Activated CD4-positive, alpha-beta T cell treated with anti-CD3 and anti-CD28 coated beads for 36 hours (primary cell): ENCODE measurements at regions of chr12 and their contacts with region 1.

Region 1: DNA sequence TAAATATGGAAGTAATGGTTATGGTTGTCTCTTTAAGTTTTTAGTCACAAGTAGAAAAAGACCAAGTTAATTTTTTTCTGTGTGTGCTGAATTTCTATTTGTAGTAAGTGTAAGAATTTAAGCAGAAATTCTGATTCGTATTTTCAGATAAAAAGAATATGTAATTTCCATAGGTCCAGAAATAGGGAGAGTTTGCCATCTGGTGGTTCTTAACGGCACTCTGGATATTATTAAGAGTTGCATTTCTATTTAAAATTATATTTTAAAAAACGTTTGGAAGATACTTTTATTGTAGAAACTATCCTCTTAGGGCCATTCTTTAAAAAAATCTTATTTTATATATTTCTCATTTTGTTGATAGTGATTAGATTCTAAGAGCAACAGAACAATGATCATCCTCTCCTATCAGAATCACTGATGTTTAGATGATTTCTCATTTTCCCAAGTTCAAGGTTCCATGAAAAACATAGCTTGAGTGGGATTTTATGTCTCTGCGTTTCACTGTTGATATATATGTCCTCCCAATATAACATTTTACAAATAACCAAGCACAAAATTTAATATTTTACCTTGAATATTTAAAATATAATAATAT is 88.3 kb downstream of the LRRK2 start:
- DNase-seq: no peak
- ATAC-seq: no peak
- H3K4me3 Mint-ChIP-seq: no peak overlapping the region
- H3K27ac Mint-ChIP-seq: no peak overlapping the region
- H3K4me1 Mint-ChIP-seq: no peaks in the 10 kb centered on the region
- H3K27me3 Mint-ChIP-seq: no peaks in the 10 kb centered on the region

Region 2: DNA sequence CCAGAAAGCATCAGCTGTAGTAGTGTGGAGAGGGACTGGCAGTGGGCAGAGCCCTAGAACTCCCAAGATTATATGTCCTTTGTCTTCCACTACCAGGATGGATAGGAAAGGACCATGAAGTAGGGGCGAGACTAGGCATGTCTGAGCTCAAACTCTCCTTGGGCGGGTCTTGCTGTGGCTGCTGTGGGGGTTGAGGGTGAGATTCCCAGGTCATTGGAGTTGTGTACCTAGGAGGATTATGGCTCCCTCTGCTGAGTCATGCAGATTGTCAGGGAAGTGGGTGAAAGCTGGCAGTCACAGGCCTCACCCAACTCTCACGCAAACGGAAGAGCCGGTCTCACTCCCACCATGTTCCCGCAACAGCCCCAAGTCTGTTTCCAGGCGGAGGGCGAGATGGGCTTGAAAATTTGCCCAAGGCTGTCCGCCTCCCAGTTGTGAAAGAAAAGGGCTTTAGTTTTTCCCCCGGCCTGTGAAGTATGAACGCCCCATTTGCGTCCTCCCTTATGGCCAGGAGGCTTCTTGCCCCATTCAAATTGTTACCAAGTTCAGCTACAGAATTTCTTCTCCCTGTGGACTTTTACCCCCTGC is 366.6 kb before region 1 on chr12:
- CTCF ChIA-PET with region 1: no interaction called
- POLR2A ChIA-PET with region 1: no interaction called
- intact Hi-C with region 1: no loop called
- DNase-seq: no peak
- ATAC-seq: no peak
- H3K4me3 Mint-ChIP-seq: no peak overlapping the region
- H3K27ac Mint-ChIP-seq: no peak overlapping the region
- H3K4me1 Mint-ChIP-seq: no peaks in the 10 kb centered on the region
- H3K27me3 Mint-ChIP-seq: no peaks in the 10 kb centered on the region

Region 3: GRCh38 chr12:40152783-40153383 is 160.2 kb before region 1 on chr12:
- CTCF ChIA-PET with region 1: no interaction called
- POLR2A ChIA-PET with region 1: no interaction called
- intact Hi-C with region 1: loop called (anchors 1 to 2 kb)
- DNase-seq: peak; percentile 67
- ATAC-seq: no peak
- H3K4me3 Mint-ChIP-seq: no peak overlapping the region
- H3K27ac Mint-ChIP-seq: no peak overlapping the region
- H3K4me1 Mint-ChIP-seq: no peaks in the 10 kb centered on the region
- H3K27me3 Mint-ChIP-seq: peaks cover 19% of the 10 kb centered on the region

Region 4: GRCh38 chr12:40382217-40382616 is 69.1 kb after region 1 on chr12:
- CTCF ChIA-PET with region 1: no interaction called
- POLR2A ChIA-PET with region 1: no interaction called
- intact Hi-C with region 1: no loop called
- DNase-seq: no peak
- ATAC-seq: no peak
- H3K4me3 Mint-ChIP-seq: no peak overlapping the region
- H3K27ac Mint-ChIP-seq: no peak overlapping the region
- H3K4me1 Mint-ChIP-seq: no peaks in the 10 kb centered on the region
- H3K27me3 Mint-ChIP-seq: no peaks in the 10 kb centered on the region

Region 5: DNA sequence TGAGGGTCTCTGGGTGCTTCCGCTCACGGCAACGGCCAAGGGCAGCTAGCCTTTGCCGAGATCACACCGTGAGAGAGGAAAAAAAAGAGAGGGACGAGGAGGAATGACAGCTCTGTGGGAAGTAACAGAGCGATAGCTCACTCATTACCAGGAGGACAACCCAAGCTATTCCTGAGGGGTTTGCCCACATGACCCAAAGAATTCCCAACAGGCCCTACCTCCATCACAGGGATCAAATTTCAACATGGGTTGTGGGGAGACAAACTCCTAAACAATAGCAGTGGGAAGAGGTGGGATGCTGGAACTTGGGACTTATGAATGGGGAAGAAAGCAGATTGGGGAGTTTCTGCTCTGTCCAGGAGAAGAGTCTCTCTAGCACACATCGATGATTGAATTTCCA is 92.3 kb after region 1 on chr12:
- CTCF ChIA-PET with region 1: no interaction called
- POLR2A ChIA-PET with region 1: no interaction called
- intact Hi-C with region 1: no loop called
- DNase-seq: no peak
- ATAC-seq: no peak
- H3K4me3 Mint-ChIP-seq: no peak overlapping the region
- H3K27ac Mint-ChIP-seq: no peak overlapping the region
- H3K4me1 Mint-ChIP-seq: no peaks in the 10 kb centered on the region
- H3K27me3 Mint-ChIP-seq: no peaks in the 10 kb centered on the region

Region 6: DNA sequence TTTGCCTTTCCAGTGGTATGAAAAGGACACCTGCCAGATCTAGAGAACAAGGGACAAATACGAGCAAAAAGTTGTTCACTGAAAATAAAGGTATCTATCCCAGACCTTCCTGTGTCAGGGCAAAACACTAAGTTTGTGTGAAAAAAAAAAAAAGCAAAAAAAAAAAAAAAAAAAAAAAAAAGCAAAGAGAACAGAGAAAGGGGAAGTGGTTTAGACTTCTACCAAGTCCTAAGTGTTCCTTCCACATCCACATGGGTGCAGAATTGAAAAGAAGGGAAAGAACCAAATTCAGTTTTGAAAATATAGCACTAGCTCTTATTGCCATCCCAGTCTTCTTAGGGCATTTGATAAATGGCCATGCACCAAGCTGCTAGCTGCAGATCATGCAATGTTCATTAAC is 1971.1 kb after region 1 on chr12:
- CTCF ChIA-PET with region 1: no interaction called
- POLR2A ChIA-PET with region 1: no interaction called
- intact Hi-C with region 1: no loop called
- DNase-seq: no peak
- ATAC-seq: no peak
- H3K4me3 Mint-ChIP-seq: no peak overlapping the region
- H3K27ac Mint-ChIP-seq: no peak overlapping the region
- H3K4me1 Mint-ChIP-seq: peaks cover 4% of the 10 kb centered on the region
- H3K27me3 Mint-ChIP-seq: peaks cover 3% of the 10 kb centered on the region